ENCODE measurements at regions of chr4 and their contacts with region 1.

Region 1: GRCh38 chr4:14985161-14985560 is 17.1 kb upstream of the CPEB2 start:
- DNase-seq: no peak
- H3K4me3 ChIP-seq: no peak overlapping the region
- H3K27ac ChIP-seq: no peak overlapping the region
- H3K4me1 ChIP-seq: no peaks in the 10 kb centered on the region
- H3K27me3 ChIP-seq: no peaks in the 10 kb centered on the region
- CTCF ChIP-seq: no peak

Region 2: DNA sequence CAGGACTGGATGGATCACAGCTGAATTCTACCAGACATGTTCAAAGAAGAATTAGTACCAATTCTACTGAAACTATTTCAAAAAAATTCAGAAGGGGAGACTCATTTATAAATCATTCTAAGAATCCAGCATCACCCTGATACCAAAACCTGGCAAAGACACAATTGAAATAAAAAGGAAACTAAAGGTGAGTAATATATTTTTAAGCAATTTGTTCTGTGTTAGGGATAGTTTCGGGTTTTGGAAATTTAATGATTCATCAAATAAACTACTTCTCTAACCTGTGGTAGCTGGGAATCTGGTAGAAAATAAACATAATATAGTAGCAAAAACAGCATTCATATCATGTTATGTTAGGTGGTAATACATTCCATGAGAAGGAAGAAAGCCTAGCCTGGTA is 695.5 kb before region 1 on chr4:
- CTCF ChIA-PET with region 1: no interaction called
- POLR2A ChIA-PET with region 1: no interaction called
- intact Hi-C with region 1: no loop called
- DNase-seq: no peak
- H3K4me3 ChIP-seq: no peak overlapping the region
- H3K27ac ChIP-seq: no peak overlapping the region
- H3K4me1 ChIP-seq: no peaks in the 10 kb centered on the region
- H3K27me3 ChIP-seq: no peaks in the 10 kb centered on the region
- CTCF ChIP-seq: no peak

Region 3: GRCh38 chr4:14711259-14711658 is 273.9 kb before region 1 on chr4:
- CTCF ChIA-PET with region 1: no interaction called
- POLR2A ChIA-PET with region 1: interaction called, 21 read pairs
- intact Hi-C with region 1: no loop called
- DNase-seq: no peak
- H3K4me3 ChIP-seq: no peak overlapping the region
- H3K27ac ChIP-seq: no peak overlapping the region
- H3K4me1 ChIP-seq: peaks cover under 1% of the 10 kb centered on the region
- H3K27me3 ChIP-seq: no peaks in the 10 kb centered on the region
- CTCF ChIP-seq: no peak

Region 4: GRCh38 chr4:15034071-15034764 is 49.1 kb after region 1 on chr4:
- CTCF ChIA-PET with region 1: no interaction called
- POLR2A ChIA-PET with region 1: no interaction called
- intact Hi-C with region 1: no loop called
- DNase-seq: no peak
- H3K4me3 ChIP-seq: no peak overlapping the region
- H3K27ac ChIP-seq: no peak overlapping the region
- H3K4me1 ChIP-seq: no peaks in the 10 kb centered on the region
- H3K27me3 ChIP-seq: no peaks in the 10 kb centered on the region
- CTCF ChIP-seq: no peak

Measured in A673 (cell line).